ENCODE measurements at regions of chr6 and their contacts with region 1.

Region 1: DNA sequence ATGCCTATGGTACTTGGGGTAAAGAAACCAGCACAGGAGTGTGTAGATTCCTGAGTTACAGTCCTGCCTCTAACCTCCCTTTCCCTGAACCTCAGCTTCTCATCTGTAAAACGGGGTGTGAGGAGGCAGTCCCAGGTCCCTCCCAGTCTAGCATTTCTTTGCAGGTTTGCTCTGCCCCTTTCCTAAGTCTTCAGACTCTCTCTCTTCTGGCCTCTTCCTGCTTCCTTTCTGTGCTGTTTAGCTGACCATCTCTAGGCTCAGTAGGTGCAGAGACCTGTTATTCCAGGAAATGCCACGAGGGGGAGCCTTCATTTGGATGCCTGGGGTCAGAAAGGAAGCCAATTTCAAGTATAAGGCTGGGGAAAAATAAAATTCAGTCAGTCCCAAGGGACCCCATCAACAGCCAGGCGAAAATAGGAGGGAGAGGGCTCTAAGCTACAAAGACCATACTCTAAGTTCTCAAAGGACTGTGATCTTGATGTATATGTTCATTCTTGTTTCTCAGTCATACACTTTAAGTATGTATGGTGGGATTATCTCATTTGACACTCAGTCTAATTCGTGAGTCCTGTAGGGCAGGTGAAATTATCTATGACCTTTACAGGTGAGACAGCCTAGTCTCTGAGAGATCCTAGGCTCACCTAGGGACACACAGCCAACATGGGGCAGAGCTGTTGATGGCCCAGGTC is 89.1 kb downstream of the NCR2 start:
- DNase-seq: no peak
- ATAC-seq: peak; percentile 39

Region 2: GRCh38 chr6:40276141-40276540 is 1148.4 kb before region 1 on chr6:
- intact Hi-C with region 1: no loop called
- DNase-seq: no peak
- ATAC-seq: peak; percentile 26

Region 3: GRCh38 chr6:41392246-41392645 is 32.3 kb before region 1 on chr6:
- intact Hi-C with region 1: no loop called
- DNase-seq: no peak
- ATAC-seq: no peak

Region 4: DNA sequence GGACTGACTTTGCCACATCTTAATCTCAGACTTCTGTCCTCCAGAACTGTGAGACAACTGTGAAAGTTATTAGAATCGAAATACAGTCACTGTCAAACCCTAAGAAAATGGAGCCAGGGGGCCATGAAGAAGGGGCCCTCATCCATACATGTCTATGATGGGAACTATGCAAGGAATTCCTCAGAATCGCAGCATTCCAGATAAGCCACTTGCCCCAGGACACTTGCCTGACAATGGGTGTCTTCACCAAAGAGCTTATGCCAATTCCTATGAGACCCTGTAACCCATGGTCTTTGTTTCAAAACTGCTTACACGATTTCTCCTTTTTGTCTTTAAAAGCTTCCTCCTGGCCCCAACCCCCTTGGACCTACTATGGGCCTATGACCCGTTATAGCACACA is 31.3 kb after region 1 on chr6:
- intact Hi-C with region 1: loop called (anchors 5 kb)
- DNase-seq: no peak
- ATAC-seq: no peak

Region 5: GRCh38 chr6:41505122-41506049 is 80.9 kb after region 1 on chr6:
- intact Hi-C with region 1: loop called (anchors 5 kb)
- DNase-seq: peak; percentile 85
- ATAC-seq: peak; percentile 88

Region 6: GRCh38 chr6:41545703-41546474 is 121.4 kb after region 1 on chr6 and contains the start of gene FOXP4:
- intact Hi-C with region 1: loop called (anchors 2 kb)
- DNase-seq: peak; percentile 93
- ATAC-seq: peak; percentile 91
- total RNA-seq, gene FOXP4: 13.9 TPM

Region 7: DNA sequence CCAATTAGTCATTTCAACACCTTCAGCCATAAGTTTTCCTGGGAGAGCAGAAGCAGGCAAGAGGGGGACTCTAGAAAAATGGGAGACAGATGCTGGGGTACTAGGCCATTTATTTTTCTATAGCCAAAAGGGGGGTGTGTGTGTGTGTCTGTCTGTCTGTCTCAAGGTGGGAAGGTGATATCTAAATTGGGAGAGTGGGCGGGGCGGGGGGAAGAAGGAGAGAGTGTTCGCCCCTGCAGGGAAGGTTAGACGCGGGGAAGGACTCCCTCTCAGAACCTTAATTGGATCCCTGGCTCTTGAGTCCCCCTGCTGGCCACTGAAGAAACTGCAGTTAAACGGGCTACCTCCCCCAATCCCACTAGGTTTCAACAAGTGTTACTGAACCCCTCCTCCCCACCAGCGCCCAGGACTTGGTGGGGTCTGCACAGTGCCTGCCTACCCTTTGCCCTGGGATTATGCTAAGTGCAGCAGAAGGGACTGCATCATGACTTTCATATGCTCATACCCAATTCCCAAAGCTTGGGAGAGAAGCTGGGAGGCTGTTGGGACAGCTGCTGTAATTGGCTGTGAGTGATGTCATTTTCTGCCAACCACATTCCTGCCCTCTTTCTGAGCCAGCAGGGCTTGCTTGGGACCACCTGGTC is 167.5 kb after region 1 on chr6:
- intact Hi-C with region 1: loop called (anchors 2 kb)
- DNase-seq: peak; percentile 78
- ATAC-seq: peak; percentile 55

Region 8: DNA sequence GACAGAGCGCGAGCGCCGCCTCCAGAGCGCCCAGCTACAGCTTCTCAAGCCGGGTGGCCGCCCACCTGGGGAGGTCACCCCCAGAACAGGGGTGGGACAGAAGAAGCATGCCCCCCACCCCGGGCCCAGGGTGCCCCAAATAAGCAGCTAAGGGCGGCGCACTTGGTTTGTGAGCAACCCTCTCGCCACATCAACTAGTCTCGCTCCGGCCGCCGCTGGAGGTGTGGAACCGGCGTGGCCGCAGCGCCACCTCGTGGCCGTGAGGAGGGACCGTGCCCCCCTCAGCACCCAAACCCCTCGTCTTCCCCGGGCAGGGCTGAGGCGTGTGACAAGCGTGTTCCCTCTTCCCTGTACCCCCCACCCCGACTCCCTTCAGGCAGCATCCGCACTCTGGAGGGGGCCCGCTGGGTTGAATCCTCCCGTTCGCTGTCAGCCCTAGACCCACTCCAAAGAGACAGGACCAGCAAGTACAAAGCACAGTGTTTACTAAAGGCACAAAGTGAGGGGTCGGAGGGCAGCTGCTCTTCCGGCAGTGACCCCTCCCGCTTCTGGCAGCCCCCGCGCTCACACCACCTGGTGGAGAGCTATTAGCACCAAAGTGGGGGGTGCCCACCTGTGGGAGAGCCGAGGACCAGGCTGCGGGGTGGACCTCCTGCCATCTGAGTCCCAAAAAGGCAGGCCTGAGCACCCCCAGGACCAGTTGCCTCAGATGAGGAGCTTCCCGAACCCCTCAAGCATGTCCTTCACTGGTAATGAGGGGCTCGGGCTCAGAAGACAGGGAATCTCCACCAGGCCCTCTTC is 259.2 kb after region 1 on chr6:
- intact Hi-C with region 1: loop called (anchors 1 kb)
- DNase-seq: peak; percentile 93
- ATAC-seq: peak; percentile 82

Measured in Right ventricle myocardium inferior (tissue), 1 donor.